ENCODE measurements at regions of chr6 and their contacts with region 1.

Region 1: GRCh38 chr6:34027445-34027936 is 118.4 kb downstream of the GRM4 start:
- DNase-seq: peak; percentile 72
- H3K4me3 ChIP-seq: no peak overlapping the region
- H3K27ac ChIP-seq: no peak overlapping the region
- H3K4me1 ChIP-seq: no peaks in the 10 kb centered on the region
- H3K27me3 ChIP-seq: no peaks in the 10 kb centered on the region
- CTCF ChIP-seq: peak; percentile 85

Region 2: DNA sequence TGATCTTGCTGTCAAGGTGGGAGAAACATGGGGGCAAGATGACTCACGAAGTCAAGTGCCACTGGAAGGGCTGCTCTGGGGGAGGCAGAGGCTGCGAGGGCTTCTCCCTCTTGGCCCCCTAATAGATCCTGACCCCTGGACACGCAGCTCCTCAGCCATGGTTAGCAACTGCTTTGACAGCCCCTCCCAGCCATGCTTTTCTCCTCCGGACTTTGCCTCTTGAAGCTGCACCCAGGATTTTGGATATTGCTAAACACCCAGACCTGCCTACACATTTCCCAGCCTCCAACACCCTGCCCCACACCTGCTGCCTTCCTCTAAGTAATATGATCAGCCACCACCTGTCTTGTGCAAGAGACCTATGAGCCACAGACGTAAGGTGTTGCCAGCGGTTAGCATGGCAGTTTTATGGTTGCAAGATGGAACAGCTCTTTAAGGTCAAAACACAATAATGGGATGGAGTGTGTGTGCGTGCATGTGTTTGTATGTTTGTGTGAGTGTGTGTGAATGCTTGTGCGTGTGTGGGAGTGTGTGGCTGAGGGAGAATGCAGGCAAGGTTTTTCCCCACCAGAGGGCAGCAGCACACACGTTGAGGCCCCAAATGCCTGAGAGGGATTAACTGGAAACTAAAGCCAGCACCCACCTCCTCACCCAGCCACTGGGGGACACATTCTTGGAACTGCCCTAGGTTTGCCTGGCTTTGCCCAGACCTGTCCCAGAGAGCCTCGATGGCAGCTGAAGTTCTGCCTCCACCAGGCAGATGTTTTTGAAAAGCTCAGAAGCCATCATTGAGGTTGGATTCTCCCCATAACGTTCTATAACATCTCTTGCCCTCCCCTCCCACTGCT is 283.3 kb before region 1 on chr6:
- CTCF ChIA-PET with region 1: interaction called, 3 read pairs
- POLR2A ChIA-PET with region 1: no interaction called
- intact Hi-C with region 1: loop called (anchors 1 kb)
- DNase-seq: peak; percentile 85
- H3K4me3 ChIP-seq: no peak overlapping the region
- H3K27ac ChIP-seq: no peak overlapping the region
- H3K4me1 ChIP-seq: peaks cover 22% of the 10 kb centered on the region
- H3K27me3 ChIP-seq: no peaks in the 10 kb centered on the region
- CTCF ChIP-seq: peak; percentile 97

Region 3: DNA sequence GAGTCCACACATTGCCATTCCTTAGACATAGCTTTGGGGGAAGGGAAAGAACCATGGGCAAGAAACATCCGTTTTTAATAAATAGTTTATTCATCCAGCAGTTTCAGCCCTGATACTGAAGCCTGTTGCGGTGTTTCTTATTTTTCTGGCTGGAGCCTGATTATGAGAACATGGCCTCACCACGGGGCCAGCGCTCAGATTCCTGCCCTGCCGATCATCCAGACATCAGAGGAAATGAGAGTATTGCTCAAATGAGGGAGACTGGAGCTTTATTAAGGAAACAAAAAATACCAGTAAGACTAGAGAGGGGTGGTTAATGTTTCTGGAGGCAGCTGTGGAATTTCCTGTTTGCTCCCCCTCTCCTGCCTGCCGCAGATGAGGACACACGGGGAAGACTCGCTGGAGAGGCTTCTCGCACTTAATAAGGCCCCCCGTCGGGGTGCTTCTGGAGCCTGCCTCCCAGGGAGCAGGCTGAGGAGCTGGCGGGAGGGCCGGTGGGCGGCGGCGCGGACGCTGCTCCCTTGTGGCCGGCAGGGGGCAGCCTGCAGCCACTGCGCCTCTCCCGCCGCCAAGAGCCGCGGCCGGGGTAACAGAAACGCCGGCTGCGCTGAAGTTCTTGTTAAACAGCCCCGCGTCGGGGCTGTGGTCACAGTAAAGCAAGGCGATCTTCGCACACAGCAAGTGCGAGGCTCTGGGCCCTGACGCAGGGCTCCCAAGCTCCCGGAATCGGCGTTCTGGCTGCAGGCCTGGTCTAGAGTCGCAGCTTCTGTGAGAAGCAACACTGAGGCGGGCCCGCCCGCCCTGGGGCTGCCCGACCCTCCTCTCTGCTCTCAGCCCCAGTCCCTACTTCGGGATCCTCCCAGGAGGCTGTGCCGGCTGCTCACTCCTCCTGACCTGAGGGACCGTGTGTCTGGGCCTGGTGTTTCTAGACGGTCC is 256.1 kb before region 1 on chr6:
- CTCF ChIA-PET with region 1: interaction called, 25 read pairs
- POLR2A ChIA-PET with region 1: no interaction called
- intact Hi-C with region 1: loop called (anchors 1 kb)
- DNase-seq: peak; percentile 100
- H3K4me3 ChIP-seq: no peak overlapping the region
- H3K27ac ChIP-seq: peak overlapping the region; percentile 97
- H3K4me1 ChIP-seq: peaks cover 53% of the 10 kb centered on the region
- H3K27me3 ChIP-seq: no peaks in the 10 kb centered on the region
- CTCF ChIP-seq: peak; percentile 99

Region 4: DNA sequence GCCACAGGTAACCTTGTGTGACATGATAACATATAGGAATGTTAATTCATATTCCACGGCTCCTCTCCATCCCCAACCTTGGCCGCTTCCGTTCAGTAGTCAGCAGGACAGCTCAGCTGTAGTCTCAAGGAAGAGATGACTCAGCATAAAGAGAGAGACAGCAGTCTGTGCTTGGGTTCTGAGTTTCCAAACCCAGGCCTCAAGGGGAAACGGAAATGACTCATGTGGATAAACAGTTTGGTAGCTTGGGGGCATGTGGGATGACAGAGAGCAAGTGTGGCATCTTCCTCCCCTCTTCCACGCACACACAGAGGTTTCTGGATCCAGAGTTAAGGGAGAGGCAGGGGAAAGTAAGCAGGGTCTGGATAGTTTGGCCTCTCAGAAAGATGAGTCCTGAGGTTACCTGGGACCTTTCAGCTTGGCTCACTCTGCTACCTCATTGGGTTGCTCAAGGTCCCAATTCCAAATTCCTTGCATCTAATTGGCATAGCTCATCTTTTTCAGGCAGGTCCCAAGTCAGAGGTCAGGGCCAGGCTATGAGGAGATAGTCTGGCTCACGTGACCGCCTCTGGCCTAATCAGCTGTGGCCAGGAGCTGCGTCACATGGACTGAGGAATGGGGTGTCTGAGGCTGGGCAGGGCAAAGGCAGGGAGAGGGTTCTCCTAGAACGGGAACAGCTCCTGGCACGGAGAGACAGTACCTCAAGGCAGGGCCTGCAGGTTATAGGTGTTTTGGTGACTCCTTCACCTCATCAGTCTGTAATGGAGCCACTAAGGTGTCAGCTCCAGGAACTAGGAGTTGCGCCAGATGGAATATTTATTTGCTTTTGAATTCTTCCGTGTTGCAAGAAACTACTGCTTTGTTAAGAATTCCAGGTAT is 187.2 kb before region 1 on chr6:
- CTCF ChIA-PET with region 1: interaction called, 4 read pairs
- POLR2A ChIA-PET with region 1: no interaction called
- intact Hi-C with region 1: loop called (anchors 10 kb)
- DNase-seq: peak; percentile 98
- H3K4me3 ChIP-seq: no peak overlapping the region
- H3K27ac ChIP-seq: peak overlapping the region; percentile 58
- H3K4me1 ChIP-seq: peaks cover 36% of the 10 kb centered on the region
- H3K27me3 ChIP-seq: no peaks in the 10 kb centered on the region
- CTCF ChIP-seq: no peak

Region 5: DNA sequence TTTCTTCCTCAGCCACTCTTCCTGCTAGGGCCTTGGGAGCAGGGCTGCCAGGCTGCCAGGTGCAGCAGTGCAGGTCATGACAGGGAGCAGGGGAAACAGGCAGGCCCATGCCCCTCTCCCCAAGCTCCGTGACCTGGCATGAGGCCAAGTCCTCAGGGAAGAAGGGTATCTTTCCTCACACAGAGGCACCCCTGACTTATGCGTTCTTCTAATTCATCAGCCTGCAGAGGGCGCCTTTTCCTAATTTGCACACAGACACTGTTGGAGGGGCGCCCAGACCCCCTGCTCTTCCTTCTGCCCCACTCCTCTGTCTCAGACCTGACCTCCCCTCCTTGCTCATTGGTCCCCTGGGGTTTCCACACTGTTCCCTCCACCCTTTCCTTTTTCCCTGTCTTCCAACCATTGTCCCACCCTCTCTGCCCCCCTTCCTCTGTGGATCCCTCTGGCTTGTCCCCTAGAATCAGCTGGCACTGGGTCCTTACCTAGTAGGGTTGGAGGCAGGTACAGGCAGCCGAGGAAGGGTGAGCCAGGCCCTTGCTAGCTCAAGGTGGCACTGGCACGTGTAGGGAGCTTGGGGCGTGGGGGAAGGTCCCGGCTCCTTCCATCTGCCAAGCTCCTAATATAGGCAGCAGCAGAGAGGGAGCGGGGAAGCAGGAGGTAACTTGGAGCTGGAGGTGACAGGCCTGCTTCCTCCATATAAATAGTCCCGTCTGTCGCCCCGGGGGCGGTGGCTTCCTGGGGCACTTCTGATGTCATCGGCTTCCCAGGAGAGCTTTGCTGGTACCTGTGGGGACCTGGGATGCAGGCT is 68.8 kb before region 1 on chr6:
- CTCF ChIA-PET with region 1: interaction called, 4 read pairs
- POLR2A ChIA-PET with region 1: no interaction called
- intact Hi-C with region 1: loop called (anchors 1 kb)
- DNase-seq: peak; percentile 74
- H3K4me3 ChIP-seq: no peak overlapping the region
- H3K27ac ChIP-seq: no peak overlapping the region
- H3K4me1 ChIP-seq: peaks cover 20% of the 10 kb centered on the region
- H3K27me3 ChIP-seq: no peaks in the 10 kb centered on the region
- CTCF ChIP-seq: peak; percentile 74

Region 6: GRCh38 chr6:34560366-34561226 is 533.1 kb after region 1 on chr6:
- CTCF ChIA-PET with region 1: no interaction called
- POLR2A ChIA-PET with region 1: no interaction called
- intact Hi-C with region 1: no loop called
- DNase-seq: no peak
- H3K4me3 ChIP-seq: no peak overlapping the region
- H3K27ac ChIP-seq: no peak overlapping the region
- H3K4me1 ChIP-seq: no peaks in the 10 kb centered on the region
- H3K27me3 ChIP-seq: no peaks in the 10 kb centered on the region
- CTCF ChIP-seq: no peak

Measured in A673 (cell line).